ENCODE measurements at regions of chr4 and their contacts with region 1.

Region 1: DNA sequence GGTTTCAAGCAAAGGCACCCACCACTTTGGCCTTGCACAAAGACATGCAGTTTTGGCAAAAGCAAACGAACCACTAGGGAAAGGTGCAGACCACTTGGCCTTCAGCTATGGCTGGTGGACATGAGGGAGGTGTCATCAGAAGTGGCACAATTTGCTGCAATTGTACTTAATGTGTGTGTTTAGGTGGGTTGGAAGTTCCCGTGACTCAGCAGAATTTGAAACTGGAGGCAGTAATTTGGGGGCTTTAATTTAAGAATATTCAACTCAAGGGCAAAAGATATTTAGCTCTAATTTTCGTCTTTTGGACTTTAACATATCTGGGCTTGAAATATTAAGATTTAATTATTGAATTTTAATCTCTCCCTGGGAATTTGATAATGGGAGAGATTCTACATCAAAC is 115.6 kb upstream of the NOCT start:
- DNase-seq: no peak
- H3K4me3 ChIP-seq: no peak overlapping the region
- H3K27ac ChIP-seq: peak overlapping the region in 1 of 2 experiments; percentile 12; a peak in 1 of 4 replicates
- H3K4me1 ChIP-seq: peaks cover 13% of the 10 kb centered on the region in 2 experiments
- H3K27me3 ChIP-seq: no peaks in the 10 kb centered on the region
- CTCF ChIP-seq: no peak
- EP300 ChIP-seq: no peak
- RAD21 ChIP-seq: no peak

Region 2: GRCh38 chr4:138910607-138911336 is 10.8 kb after region 1 on chr4:
- CTCF ChIA-PET with region 1: interaction called, 14 read pairs
- POLR2A ChIA-PET with region 1: interaction called, 8 read pairs
- DNase-seq: peak; percentile 75
- H3K4me3 ChIP-seq: peak overlapping the region; percentile 2 to 35; a peak in 1 of 4 replicates
- H3K27ac ChIP-seq: peak overlapping the region; percentile 50 to 99
- H3K4me1 ChIP-seq: peaks cover 5 to 51% of the 10 kb centered on the region in 2 experiments; a peak in 3 of 4 replicates
- H3K27me3 ChIP-seq: no peaks in the 10 kb centered on the region
- CTCF ChIP-seq: no peak
- EP300 ChIP-seq: peak in 1 of 2 experiments; percentile 96; a peak in 2 of 4 replicates
- RAD21 ChIP-seq: peak; percentile 16; the same call in 1 of the 2 replicates